Activated B cell treated with CpG ODN at 0.5 μM for 24 hours (primary cell): ENCODE measurements at regions of chr20 and their contacts with region 1.

Region 1: GRCh38 chr20:31723319-31724078 is 831 bp upstream of the BCL2L1 start:
- DNase-seq: peak; percentile 99
- ATAC-seq: peak; percentile 95
- H3K4me3 Mint-ChIP-seq: peak overlapping the region; percentile 95
- H3K27ac Mint-ChIP-seq: peak overlapping the region; percentile 96
- H3K4me1 Mint-ChIP-seq: peaks cover 43% of the 10 kb centered on the region
- H3K27me3 Mint-ChIP-seq: no peaks in the 10 kb centered on the region
- CTCF ChIP-seq: peak; percentile 61

Region 2: GRCh38 chr20:31560094-31560899 is 163.2 kb before region 1 on chr20:
- CTCF ChIA-PET with region 1: interaction called, 7 read pairs
- POLR2A ChIA-PET with region 1: no interaction called
- intact Hi-C with region 1: loop called (anchors 1 kb)
- DNase-seq: peak; percentile 61
- ATAC-seq: peak; percentile 67
- H3K4me3 Mint-ChIP-seq: no peak overlapping the region
- H3K27ac Mint-ChIP-seq: no peak overlapping the region
- H3K4me1 Mint-ChIP-seq: peaks cover 4% of the 10 kb centered on the region
- H3K27me3 Mint-ChIP-seq: no peaks in the 10 kb centered on the region
- CTCF ChIP-seq: peak; percentile 82

Region 3: DNA sequence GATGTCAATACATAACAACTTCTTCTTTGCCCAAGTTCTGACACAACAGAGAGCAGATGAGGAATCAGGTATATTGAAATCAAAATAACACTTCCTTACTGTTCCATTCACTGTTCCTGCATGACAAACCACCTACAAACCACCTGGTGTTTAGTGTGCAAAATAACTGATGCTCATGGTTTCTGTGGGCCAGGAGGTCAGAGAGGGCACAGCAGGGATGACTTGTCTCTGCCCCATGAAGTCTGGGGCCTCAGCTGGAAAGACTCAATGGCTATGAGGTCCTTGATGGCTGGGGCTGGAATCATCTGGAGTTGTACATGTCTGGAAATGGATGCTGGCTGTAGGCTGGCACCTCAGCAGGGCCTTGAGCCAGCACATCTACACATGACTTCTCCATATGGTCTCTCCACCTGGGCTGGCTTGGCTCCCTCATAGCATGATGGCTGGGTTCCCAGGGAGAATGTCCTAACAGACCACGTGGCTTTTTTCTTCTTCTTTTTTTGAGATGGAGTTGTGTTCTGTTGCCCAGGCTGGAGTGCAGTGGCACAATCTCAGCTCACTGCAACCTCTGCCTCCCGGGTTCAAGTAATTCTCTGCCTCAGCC is 93.2 kb before region 1 on chr20:
- CTCF ChIA-PET with region 1: interaction called, 38 read pairs
- POLR2A ChIA-PET with region 1: interaction called, 9 read pairs
- intact Hi-C with region 1: loop called (anchors 1 kb)
- DNase-seq: no peak
- ATAC-seq: no peak
- H3K4me3 Mint-ChIP-seq: no peak overlapping the region
- H3K27ac Mint-ChIP-seq: no peak overlapping the region
- H3K4me1 Mint-ChIP-seq: peaks cover 6% of the 10 kb centered on the region
- H3K27me3 Mint-ChIP-seq: no peaks in the 10 kb centered on the region
- CTCF ChIP-seq: no peak

Region 4: DNA sequence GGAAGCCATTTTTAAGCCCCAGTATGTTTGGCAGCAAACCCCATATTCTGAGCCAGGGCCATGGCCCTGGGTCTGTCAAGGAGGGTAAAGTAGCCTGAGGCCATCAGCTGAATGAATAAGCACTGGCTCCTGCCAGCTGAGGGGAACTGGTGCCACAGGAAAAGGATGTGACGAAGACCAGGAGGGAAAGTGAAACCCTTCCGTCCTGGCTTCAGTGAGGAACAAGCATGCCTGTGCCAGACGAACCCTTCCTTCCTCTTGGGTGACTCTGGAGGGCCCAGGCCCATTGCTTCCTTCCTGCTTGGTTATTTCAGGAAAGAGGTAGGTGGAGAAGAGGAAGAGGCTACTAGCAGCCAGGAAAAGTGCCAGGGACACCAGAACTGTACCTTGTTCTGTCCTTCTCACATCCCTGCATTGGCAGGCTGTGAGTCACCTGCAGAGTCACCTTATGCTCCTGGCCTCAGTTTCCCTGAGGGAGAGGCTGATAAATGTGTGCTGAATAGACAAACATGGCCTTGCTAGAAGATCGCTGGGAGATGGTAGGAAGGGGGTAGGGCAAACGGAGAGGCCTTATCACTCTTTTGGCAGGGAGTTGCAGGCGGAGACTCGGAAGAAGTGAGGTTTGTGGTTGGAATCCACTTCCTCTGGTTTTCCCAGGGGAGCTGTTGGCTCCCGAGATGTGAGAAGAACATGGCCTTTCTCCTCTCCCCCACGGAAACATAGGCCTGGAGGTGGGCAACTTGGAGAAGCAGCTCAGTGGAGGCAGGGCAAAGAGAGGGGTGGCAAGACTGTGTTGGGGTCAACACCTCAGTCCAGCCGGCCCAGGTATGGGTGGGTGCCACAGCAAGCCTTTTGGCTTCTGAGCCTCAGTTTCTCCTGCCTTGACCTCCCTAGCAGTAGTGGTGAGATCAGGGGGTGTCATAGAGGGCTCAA is 48.3 kb before region 1 on chr20:
- CTCF ChIA-PET with region 1: interaction called, 23 read pairs
- POLR2A ChIA-PET with region 1: interaction called, 24 read pairs
- intact Hi-C with region 1: no loop called
- DNase-seq: peak; percentile 26
- ATAC-seq: peak; percentile 82
- H3K4me3 Mint-ChIP-seq: peak overlapping the region; percentile 89
- H3K27ac Mint-ChIP-seq: peak overlapping the region; percentile 94
- H3K4me1 Mint-ChIP-seq: peaks cover 44% of the 10 kb centered on the region
- H3K27me3 Mint-ChIP-seq: no peaks in the 10 kb centered on the region
- CTCF ChIP-seq: no peak

Region 5: DNA sequence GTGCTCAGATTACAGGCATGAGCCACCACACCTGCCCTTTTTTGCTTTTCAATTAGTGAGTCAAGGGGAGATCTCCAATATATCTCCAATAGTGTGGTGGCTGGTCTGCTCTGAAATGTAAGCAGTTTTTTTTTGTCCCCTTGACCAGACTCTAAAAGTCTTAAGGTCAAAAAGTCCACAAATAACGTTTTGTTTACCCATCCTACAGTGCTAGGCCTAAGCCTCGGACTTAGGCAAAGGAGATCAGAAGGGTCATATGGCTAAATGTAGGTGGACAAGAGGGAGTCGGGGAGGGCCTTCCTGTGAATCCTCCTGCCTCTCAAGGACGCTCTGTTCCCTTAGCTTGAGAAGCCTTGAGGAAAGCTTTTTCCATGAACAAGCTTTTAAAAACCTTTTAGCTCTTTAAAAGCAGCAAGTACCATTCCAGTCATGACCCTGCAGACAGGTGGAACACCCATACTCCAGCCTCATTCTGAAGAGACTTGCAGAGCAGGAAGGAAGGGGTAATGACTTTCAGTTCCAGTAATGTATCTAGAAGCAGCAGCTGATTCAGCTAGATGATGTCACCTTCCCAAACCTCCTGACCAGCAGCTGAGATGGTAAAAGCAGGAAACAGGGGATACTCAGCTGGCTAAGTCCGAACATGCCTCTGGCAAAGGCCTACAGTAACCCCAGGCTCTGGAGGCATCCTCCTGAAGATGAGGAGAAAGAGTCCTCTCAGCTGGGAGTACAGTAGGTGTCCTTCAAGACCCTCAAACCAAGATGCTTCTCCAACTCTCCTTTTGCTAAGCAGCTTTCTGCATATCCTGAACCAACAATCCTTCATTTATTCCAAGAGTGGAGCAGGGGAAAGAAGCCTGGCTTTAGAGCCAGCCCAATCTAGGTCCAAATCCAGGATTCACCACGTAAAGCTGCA is 24.4 kb before region 1 on chr20:
- CTCF ChIA-PET with region 1: interaction called, 12 read pairs
- POLR2A ChIA-PET with region 1: interaction called, 7 read pairs
- intact Hi-C with region 1: no loop called
- DNase-seq: no peak
- ATAC-seq: peak; percentile 71
- H3K4me3 Mint-ChIP-seq: no peak overlapping the region
- H3K27ac Mint-ChIP-seq: peak overlapping the region; percentile 71
- H3K4me1 Mint-ChIP-seq: peaks cover 44% of the 10 kb centered on the region
- H3K27me3 Mint-ChIP-seq: no peaks in the 10 kb centered on the region
- CTCF ChIP-seq: no peak

Region 6: GRCh38 chr20:31738729-31739561 is 15.4 kb after region 1 on chr20 and contains the start of gene TPX2:
- CTCF ChIA-PET with region 1: interaction called, 9 read pairs
- POLR2A ChIA-PET with region 1: interaction called, 4 read pairs
- intact Hi-C with region 1: loop called (anchors 1 kb)
- DNase-seq: peak; percentile 61
- ATAC-seq: peak; percentile 99
- H3K4me3 Mint-ChIP-seq: no peak within 1 kb of the TSS
- H3K27ac Mint-ChIP-seq: no peak within 1 kb of the TSS
- H3K4me1 Mint-ChIP-seq: no peaks in the 10 kb centered on the region
- H3K27me3 Mint-ChIP-seq: no peaks in the 10 kb centered on the region
- CTCF ChIP-seq: no peak
- total RNA-seq, gene TPX2: 2.2 and 2.8 TPM in 2 replicates

Region 7: DNA sequence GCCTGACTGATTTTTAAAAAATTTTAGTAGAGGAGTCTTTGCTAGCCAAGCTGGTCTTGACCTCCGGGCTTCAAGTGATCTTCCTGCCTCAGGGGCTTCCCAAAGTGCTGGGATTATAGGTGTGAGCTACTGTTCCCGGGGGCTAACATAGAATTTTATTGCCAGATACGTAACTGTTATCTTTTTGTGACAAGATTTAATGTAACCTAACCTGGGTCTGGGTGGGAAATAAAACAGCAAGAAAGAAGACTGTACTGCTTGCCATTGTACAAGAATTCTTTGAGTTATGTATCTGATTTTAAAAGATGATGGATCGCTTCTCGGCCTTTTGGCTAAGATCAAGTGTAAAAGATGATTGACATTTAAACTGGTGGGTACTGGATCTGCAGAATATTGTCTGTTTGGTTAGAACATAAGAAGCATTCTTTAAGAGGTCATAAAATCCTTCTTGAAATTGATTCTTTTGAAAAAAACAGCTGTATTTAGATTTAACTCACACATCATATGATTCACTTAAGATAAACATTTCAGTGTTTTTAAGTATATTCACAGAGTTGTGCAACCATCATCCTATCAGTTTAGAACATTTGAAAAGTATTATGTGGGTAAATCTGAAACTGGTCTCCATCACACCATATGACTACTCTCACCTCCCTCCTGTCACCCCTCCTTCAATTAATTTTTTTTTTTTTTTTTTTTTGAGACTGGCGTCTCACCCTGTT is 37.2 kb after region 1 on chr20:
- CTCF ChIA-PET with region 1: no interaction called
- POLR2A ChIA-PET with region 1: no interaction called
- intact Hi-C with region 1: no loop called
- DNase-seq: no peak
- ATAC-seq: no peak
- H3K4me3 Mint-ChIP-seq: no peak overlapping the region
- H3K27ac Mint-ChIP-seq: no peak overlapping the region
- H3K4me1 Mint-ChIP-seq: no peaks in the 10 kb centered on the region
- H3K27me3 Mint-ChIP-seq: no peaks in the 10 kb centered on the region
- CTCF ChIP-seq: no peak

Region 8: GRCh38 chr20:32357869-32358631 is 634.6 kb after region 1 on chr20 and contains the start of gene ASXL1:
- CTCF ChIA-PET with region 1: no interaction called
- POLR2A ChIA-PET with region 1: no interaction called
- intact Hi-C with region 1: loop called (anchors 5 kb)
- DNase-seq: peak; percentile 94
- ATAC-seq: peak; percentile 81
- H3K4me3 Mint-ChIP-seq: peak within 1 kb of the TSS; percentile 98
- H3K27ac Mint-ChIP-seq: peak within 1 kb of the TSS; percentile 100
- H3K4me1 Mint-ChIP-seq: peaks cover 76% of the 10 kb centered on the region
- H3K27me3 Mint-ChIP-seq: no peaks in the 10 kb centered on the region
- CTCF ChIP-seq: no peak
- total RNA-seq, gene ASXL1: 145 and 169 TPM in 2 replicates